Vagina (tissue), 2 donors: ENCODE measurements at regions of chr12 and their contacts with region 1.

Region 1: GRCh38 chr12:123150744-123151456 is at the start of gene PITPNM2:
- DNase-seq: peak in 1 of 2 donors; percentile 49
- H3K4me3 ChIP-seq: peak within 1 kb of the TSS; percentile 77 to 90
- H3K27ac ChIP-seq: peak within 1 kb of the TSS; percentile 94
- H3K4me1 ChIP-seq: peaks cover 30% of the 10 kb centered on the region
- H3K27me3 ChIP-seq: no peaks in the 10 kb centered on the region
- CTCF ChIP-seq: peak in 1 of 3 experiments; percentile 18
- POLR2A ChIP-seq: no peak
- total RNA-seq, gene PITPNM2: 8.1 TPM

Region 2: GRCh38 chr12:122841544-122842321 is 309.2 kb before region 1 on chr12:
- intact Hi-C with region 1: loop called (anchors 5 kb)
- DNase-seq: no peak
- H3K4me3 ChIP-seq: no peak overlapping the region
- H3K27ac ChIP-seq: peak overlapping the region; percentile 33
- H3K4me1 ChIP-seq: peaks cover 65% of the 10 kb centered on the region
- H3K27me3 ChIP-seq: no peaks in the 10 kb centered on the region
- CTCF ChIP-seq: no peak
- POLR2A ChIP-seq: no peak